OCI-LY7 (cell line): ENCODE measurements at regions of chr15 and their contacts with region 1.

Region 1: GRCh38 chr15:33581032-33581431 is 270.3 kb downstream of the RYR3 start:
- DNase-seq: no peak
- H3K4me3 ChIP-seq: no peak overlapping the region
- H3K27ac ChIP-seq: no peak overlapping the region
- H3K4me1 ChIP-seq: no peaks in the 10 kb centered on the region
- CTCF ChIP-seq: no peak

Region 2: DNA sequence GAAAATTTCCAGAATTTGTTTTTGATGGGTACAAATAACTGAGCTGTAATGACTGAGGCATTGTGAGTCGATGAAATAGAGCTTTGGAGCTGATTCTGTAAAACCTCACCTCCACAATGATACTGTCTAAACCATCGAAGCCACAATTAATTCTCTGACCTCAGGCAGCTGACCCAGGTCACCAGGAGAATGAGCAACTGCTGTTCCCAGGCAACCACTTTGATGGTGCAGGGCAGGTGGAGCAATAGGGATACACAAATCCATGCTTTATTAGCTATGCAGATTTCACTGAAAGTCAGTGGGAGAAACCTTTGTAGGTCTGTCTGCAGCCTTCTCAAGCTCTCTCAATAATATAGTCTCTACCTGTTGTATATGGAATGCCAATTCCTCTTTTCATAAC is 65.9 kb before region 1 on chr15:
- CTCF ChIA-PET with region 1: no interaction called
- POLR2A ChIA-PET with region 1: no interaction called
- intact Hi-C with region 1: loop called (anchors 10 kb)
- DNase-seq: no peak
- H3K4me3 ChIP-seq: no peak overlapping the region
- H3K27ac ChIP-seq: no peak overlapping the region
- H3K4me1 ChIP-seq: no peaks in the 10 kb centered on the region
- CTCF ChIP-seq: no peak